ENCODE measurements at regions of chr21 and their contacts with region 1.

Region 1: DNA sequence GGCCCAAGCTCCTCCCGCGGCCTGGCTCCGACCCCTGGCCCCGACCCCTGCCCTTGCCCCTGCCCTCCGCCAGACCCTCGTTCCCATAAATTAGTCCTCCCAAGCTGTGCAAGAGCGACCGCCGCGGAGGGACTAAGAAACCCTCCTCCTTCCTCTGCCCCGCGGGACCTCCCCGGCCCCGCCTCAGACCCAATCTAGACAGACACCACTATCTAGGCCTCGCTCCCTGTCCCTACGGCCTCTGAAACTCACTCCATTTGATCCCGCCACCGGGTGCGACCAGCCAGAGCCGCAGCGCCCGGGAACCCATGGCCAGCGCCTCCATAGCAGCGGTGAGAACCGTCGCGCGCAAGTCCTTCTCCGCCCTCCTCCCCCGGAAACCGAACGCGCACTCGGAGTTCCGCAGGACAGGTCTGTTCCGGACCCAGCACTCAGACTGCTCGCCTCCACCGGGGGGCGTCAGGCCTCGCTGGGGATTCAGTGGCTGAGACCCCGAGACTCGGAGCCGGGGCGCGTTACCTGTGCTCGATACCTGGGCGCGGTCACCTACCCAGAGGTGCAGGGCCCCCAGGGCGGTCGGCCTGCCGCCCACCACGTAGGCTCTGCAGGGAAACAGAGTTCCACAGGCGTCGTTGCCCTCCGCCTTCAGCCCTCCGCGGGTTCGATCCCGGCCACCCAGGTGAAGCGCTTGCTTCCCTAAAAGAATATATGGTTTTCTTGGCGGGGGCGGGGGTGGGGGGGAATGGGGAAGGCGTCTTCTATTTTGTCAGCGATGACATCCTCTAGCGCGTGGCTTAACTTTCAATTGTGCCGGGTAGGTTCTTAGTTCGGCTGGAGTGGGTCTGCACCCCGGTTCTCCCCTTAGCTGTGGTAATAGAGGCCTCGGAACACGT is at the start of gene MRPL39:
- DNase-seq: peak; percentile 62
- ATAC-seq: peak; percentile 97
- H3K4me3 ChIP-seq: peak within 1 kb of the TSS; percentile 94
- H3K27ac ChIP-seq: peak within 1 kb of the TSS; percentile 79
- H3K4me1 ChIP-seq: peaks cover 9% of the 10 kb centered on the region; the same call in 1 of the 2 replicates
- H3K27me3 ChIP-seq: no peaks in the 10 kb centered on the region
- CTCF ChIP-seq: peak; percentile 74 to 81 (median 78)
- EP300 ChIP-seq: 0 out of 4 replicates have a peak, but pooled peaks of 1 of the 2 experiments have one; percentile 11
- POLR2A ChIP-seq: peak; percentile 97
- RAD21 ChIP-seq: peak; percentile 53
- polyA plus RNA-seq, gene MRPL39: 220 to 292 TPM

Region 2: GRCh38 chr21:25350056-25350455 is 257.3 kb before region 1 on chr21:
- CTCF ChIA-PET with region 1: interaction called, 12 read pairs
- POLR2A ChIA-PET with region 1: no interaction called
- RAD21 ChIA-PET with region 1: no interaction called
- SMC1A ChIA-PET with region 1: interaction called, 6 read pairs
- in situ Hi-C with region 1: no loop called
- intact Hi-C with region 1: no loop called
- DNase-seq: no peak
- ATAC-seq: peak; percentile 83
- H3K4me3 ChIP-seq: no peak overlapping the region
- H3K27ac ChIP-seq: no peak overlapping the region
- H3K4me1 ChIP-seq: no peaks in the 10 kb centered on the region
- H3K27me3 ChIP-seq: no peaks in the 10 kb centered on the region
- CTCF ChIP-seq: peak; percentile 45 to 55 (median 48); a peak in 5 of 6 replicates
- EP300 ChIP-seq: no peak
- POLR2A ChIP-seq: no peak
- RAD21 ChIP-seq: peak; percentile 55

Region 3: DNA sequence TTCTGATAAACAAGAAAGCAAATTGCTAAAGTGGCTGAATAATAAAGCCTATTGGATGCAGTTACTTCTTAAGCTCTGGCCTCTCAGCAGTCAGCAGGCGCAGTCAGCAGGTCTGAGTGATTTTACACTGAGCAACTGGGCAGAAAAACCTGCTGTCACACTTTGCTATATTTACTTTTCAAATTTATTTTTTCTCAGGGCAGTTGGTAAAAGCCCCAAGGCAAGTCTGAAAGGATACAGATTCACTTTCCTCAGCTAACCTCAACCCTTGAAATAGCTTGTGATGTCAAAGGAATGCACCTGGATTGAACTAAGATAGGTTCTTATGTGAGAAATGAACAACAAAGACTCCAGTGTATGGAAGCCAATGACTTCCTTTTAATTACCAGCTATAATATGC is 93.3 kb after region 1 on chr21:
- CTCF ChIA-PET with region 1: interaction called, 70 read pairs
- POLR2A ChIA-PET with region 1: no interaction called
- RAD21 ChIA-PET with region 1: interaction called, 5 read pairs
- SMC1A ChIA-PET with region 1: interaction called, 32 read pairs
- in situ Hi-C with region 1: loop called (anchors 5 kb)
- intact Hi-C with region 1: no loop called
- DNase-seq: no peak
- ATAC-seq: no peak
- H3K4me3 ChIP-seq: no peak overlapping the region
- H3K27ac ChIP-seq: no peak overlapping the region
- H3K4me1 ChIP-seq: no peaks in the 10 kb centered on the region
- H3K27me3 ChIP-seq: no peaks in the 10 kb centered on the region
- CTCF ChIP-seq: no peak
- EP300 ChIP-seq: no peak
- POLR2A ChIP-seq: no peak
- RAD21 ChIP-seq: no peak

Region 4: DNA sequence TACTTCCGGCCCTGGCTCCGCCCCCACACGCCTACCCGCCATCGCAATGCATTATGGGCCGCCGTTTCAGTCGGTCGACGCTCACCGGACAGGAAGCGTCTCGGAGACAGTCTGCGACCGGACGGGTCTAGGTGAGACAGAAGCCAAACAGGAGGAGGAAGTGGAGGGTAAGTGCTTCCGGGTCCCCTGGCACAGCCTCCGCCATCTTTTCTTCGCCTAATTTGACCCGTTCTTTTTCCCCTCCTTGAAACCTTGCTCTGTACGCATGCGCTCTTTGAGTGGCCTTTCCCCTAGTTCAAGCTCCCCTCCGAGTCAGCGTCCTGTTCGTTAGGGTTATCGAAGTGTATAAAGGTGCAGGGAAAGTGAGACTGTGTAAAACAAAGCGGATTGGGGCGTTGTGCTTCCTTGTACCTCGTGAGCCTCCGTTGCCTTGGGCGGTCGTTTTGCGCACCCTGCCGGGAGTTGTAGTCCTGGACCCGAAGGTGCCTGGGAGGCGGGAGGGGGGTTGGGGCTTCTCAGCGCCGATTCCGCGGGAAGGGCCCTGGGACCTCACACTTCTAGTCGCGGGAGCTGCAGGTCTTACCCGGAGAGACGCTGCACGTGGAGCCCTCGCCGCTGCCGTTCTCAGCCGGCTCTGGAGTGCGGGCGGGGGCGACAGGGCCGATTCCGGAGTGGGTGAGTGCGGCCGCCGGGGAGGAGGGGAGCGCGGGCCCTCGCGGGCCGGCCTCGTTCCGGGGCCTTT is 127.7 kb after region 1 on chr21 and contains the starts of genes ATP5PF and GABPA:
- CTCF ChIA-PET with region 1: interaction called, 11 read pairs
- POLR2A ChIA-PET with region 1: interaction called, 3 read pairs
- RAD21 ChIA-PET with region 1: interaction called, 4 read pairs
- SMC1A ChIA-PET with region 1: interaction called, 4 read pairs
- in situ Hi-C with region 1: loop called (anchors 5 kb)
- intact Hi-C with region 1: loop called (anchors 1 kb)
- DNase-seq: peak; percentile 97
- ATAC-seq: peak; percentile 90
- H3K4me3 ChIP-seq: peak within 1 kb of the TSS; percentile 98
- H3K27ac ChIP-seq: peak within 1 kb of the TSS; percentile 97
- H3K4me1 ChIP-seq: peaks cover 26% of the 10 kb centered on the region
- H3K27me3 ChIP-seq: no peaks in the 10 kb centered on the region
- CTCF ChIP-seq: no peak
- EP300 ChIP-seq: peak in 1 of 2 experiments; percentile 41; a peak in 1 of 4 replicates
- POLR2A ChIP-seq: peak; percentile 72
- RAD21 ChIP-seq: no peak
- polyA plus RNA-seq, gene ATP5PF: 1,189 to 1,604 TPM
- polyA plus RNA-seq, gene GABPA: 7.6 to 8.4 TPM

Region 5: GRCh38 chr21:25862596-25862995 is 255.2 kb after region 1 on chr21:
- CTCF ChIA-PET with region 1: interaction called, 7 read pairs
- POLR2A ChIA-PET with region 1: no interaction called
- RAD21 ChIA-PET with region 1: interaction called, 7 read pairs
- SMC1A ChIA-PET with region 1: interaction called, 7 read pairs
- in situ Hi-C with region 1: loop called (anchors 5 kb)
- intact Hi-C with region 1: loop called (anchors 1 kb)
- DNase-seq: no peak
- ATAC-seq: peak; percentile 64; the same call in 2 of the 3 replicates
- H3K4me3 ChIP-seq: no peak overlapping the region
- H3K27ac ChIP-seq: no peak overlapping the region
- H3K4me1 ChIP-seq: no peaks in the 10 kb centered on the region
- H3K27me3 ChIP-seq: no peaks in the 10 kb centered on the region
- CTCF ChIP-seq: peak; percentile 60 to 92 (median 75)
- EP300 ChIP-seq: no peak
- POLR2A ChIP-seq: no peak
- RAD21 ChIP-seq: peak; percentile 78

Region 6: GRCh38 chr21:26715878-26716506 is 1108.6 kb after region 1 on chr21:
- CTCF ChIA-PET with region 1: interaction called, 6 read pairs
- POLR2A ChIA-PET with region 1: no interaction called
- RAD21 ChIA-PET with region 1: no interaction called
- SMC1A ChIA-PET with region 1: no interaction called
- in situ Hi-C with region 1: loop called (anchors 5 kb)
- intact Hi-C with region 1: loop called (anchors 5 kb)
- DNase-seq: no peak
- ATAC-seq: peak; percentile 29; the same call in 1 of the 3 replicates
- H3K4me3 ChIP-seq: no peak overlapping the region
- H3K27ac ChIP-seq: no peak overlapping the region
- H3K4me1 ChIP-seq: no peaks in the 10 kb centered on the region
- H3K27me3 ChIP-seq: no peaks in the 10 kb centered on the region
- CTCF ChIP-seq: peak; percentile 50 to 54 (median 50); a peak in 5 of 6 replicates
- EP300 ChIP-seq: no peak
- POLR2A ChIP-seq: no peak
- RAD21 ChIP-seq: peak; percentile 32; the same call in 1 of the 2 replicates